Activated B cell treated with CpG ODN at 0.5 μM for 24 hours (primary cell): ENCODE measurements at regions of chr20 and their contacts with region 1.

Region 1: GRCh38 chr20:34768096-34768495 is 57.4 kb downstream of the NCOA6 start:
- DNase-seq: no peak
- ATAC-seq: no peak
- H3K4me3 Mint-ChIP-seq: no peak overlapping the region
- H3K27ac Mint-ChIP-seq: no peak overlapping the region
- H3K4me1 Mint-ChIP-seq: no peaks in the 10 kb centered on the region
- H3K27me3 Mint-ChIP-seq: no peaks in the 10 kb centered on the region
- CTCF ChIP-seq: no peak

Region 2: GRCh38 chr20:34262488-34263288 is 505.4 kb before region 1 on chr20:
- CTCF ChIA-PET with region 1: no interaction called
- POLR2A ChIA-PET with region 1: no interaction called
- intact Hi-C with region 1: no loop called
- DNase-seq: no peak
- ATAC-seq: no peak
- H3K4me3 Mint-ChIP-seq: no peak overlapping the region
- H3K27ac Mint-ChIP-seq: no peak overlapping the region
- H3K4me1 Mint-ChIP-seq: peaks cover 3% of the 10 kb centered on the region
- H3K27me3 Mint-ChIP-seq: no peaks in the 10 kb centered on the region
- CTCF ChIP-seq: no peak

Region 3: DNA sequence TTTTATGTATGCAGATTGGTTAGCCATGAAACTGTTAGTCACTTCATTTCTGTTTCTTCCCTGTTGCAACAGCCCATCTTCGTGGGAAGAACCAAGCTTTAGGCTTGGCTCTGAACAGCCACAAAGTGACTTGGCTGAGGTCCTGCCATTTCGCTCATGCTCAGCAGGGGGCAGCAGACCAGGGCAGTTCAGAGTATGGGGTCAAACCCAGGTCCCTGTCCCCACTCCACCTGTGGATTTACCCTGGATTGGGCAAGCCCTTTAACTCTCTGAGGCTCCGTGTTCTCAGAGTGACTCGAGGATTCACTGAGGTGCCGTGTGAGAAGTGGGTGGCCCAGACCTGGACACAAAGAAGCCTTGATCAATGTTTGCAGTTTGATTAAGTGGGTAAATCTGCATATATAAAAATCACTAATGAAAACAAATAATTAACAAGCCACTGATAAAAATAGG is 229.4 kb before region 1 on chr20:
- CTCF ChIA-PET with region 1: interaction called, 30 read pairs
- POLR2A ChIA-PET with region 1: interaction called, 3 read pairs
- intact Hi-C with region 1: loop called (anchors 1 kb)
- DNase-seq: peak; percentile 37
- ATAC-seq: peak; percentile 61
- H3K4me3 Mint-ChIP-seq: no peak overlapping the region
- H3K27ac Mint-ChIP-seq: no peak overlapping the region
- H3K4me1 Mint-ChIP-seq: peaks cover 15% of the 10 kb centered on the region
- H3K27me3 Mint-ChIP-seq: no peaks in the 10 kb centered on the region
- CTCF ChIP-seq: no peak

Region 4: GRCh38 chr20:34755367-34755766 is 12.7 kb before region 1 on chr20:
- CTCF ChIA-PET with region 1: interaction called, 17 read pairs
- POLR2A ChIA-PET with region 1: no interaction called
- intact Hi-C with region 1: no loop called
- DNase-seq: no peak
- ATAC-seq: peak; percentile 25
- H3K4me3 Mint-ChIP-seq: no peak overlapping the region
- H3K27ac Mint-ChIP-seq: no peak overlapping the region
- H3K4me1 Mint-ChIP-seq: peaks cover 2% of the 10 kb centered on the region
- H3K27me3 Mint-ChIP-seq: no peaks in the 10 kb centered on the region
- CTCF ChIP-seq: no peak

Region 5: DNA sequence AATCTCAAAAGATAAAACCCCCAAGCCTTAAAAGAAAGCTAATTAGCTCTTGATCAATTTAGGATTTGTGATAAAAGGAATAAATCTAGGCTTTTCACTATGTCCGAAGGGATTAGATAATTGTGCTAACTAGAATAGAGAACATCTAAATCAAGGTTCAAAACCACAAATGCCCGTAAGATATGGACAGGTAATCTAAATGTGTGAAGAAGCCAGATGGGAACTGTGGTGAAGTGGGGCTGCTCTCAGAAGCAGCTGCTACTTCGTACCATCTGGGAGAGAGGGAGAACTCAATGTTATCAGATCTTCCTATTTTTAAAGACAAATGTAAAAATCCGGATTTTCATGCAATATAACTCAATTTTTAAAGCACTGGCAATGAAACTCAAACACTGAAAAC is 13.1 kb after region 1 on chr20:
- CTCF ChIA-PET with region 1: interaction called, 12 read pairs
- POLR2A ChIA-PET with region 1: no interaction called
- intact Hi-C with region 1: no loop called
- DNase-seq: no peak
- ATAC-seq: no peak
- H3K4me3 Mint-ChIP-seq: no peak overlapping the region
- H3K27ac Mint-ChIP-seq: no peak overlapping the region
- H3K4me1 Mint-ChIP-seq: no peaks in the 10 kb centered on the region
- H3K27me3 Mint-ChIP-seq: no peaks in the 10 kb centered on the region
- CTCF ChIP-seq: no peak